ENCODE measurements at regions of chrX and their contacts with region 1.

Region 1: GRCh38 chrX:46984705-46985104 is 72.5 kb downstream of the JADE3 start:
- DNase-seq: no peak
- H3K4me3 Mint-ChIP-seq: no peak overlapping the region
- H3K27ac Mint-ChIP-seq: no peak overlapping the region
- H3K4me1 Mint-ChIP-seq: no peaks in the 10 kb centered on the region
- H3K27me3 Mint-ChIP-seq: no peaks in the 10 kb centered on the region

Region 2: DNA sequence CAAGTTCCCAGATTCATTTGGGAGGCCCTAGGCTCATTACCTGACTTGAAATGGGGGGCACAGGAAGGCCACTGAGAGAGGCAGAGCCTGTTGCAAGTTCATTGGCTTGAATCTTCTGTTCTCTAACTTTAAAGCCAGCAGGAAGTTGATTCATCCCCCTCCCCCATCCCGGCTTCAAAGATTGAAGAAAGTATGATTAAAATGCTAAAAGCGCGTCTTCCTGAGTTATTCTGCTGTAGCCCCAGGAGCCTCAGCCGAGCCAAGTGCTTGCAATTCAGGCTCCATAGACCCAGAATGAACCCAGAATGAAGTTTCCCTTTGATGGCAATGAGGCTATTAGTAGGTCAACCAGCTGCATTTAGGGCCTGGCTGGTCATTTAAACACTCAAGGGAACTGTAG is 396.4 kb before region 1 on chrX:
- CTCF ChIA-PET with region 1: no interaction called
- intact Hi-C with region 1: no loop called
- DNase-seq: peak; percentile 78
- H3K4me3 Mint-ChIP-seq: peak overlapping the region; percentile 34
- H3K27ac Mint-ChIP-seq: peak overlapping the region; percentile 80
- H3K4me1 Mint-ChIP-seq: peaks cover 22% of the 10 kb centered on the region
- H3K27me3 Mint-ChIP-seq: no peaks in the 10 kb centered on the region

Region 3: GRCh38 chrX:46812445-46812844 is 172.3 kb before region 1 on chrX:
- CTCF ChIA-PET with region 1: no interaction called
- intact Hi-C with region 1: no loop called
- DNase-seq: no peak
- H3K4me3 Mint-ChIP-seq: no peak overlapping the region
- H3K27ac Mint-ChIP-seq: no peak overlapping the region
- H3K4me1 Mint-ChIP-seq: no peaks in the 10 kb centered on the region
- H3K27me3 Mint-ChIP-seq: no peaks in the 10 kb centered on the region

Region 4: GRCh38 chrX:46841346-46841745 is 143.4 kb before region 1 on chrX:
- CTCF ChIA-PET with region 1: no interaction called
- intact Hi-C with region 1: no loop called
- DNase-seq: no peak
- H3K4me3 Mint-ChIP-seq: no peak overlapping the region
- H3K27ac Mint-ChIP-seq: no peak overlapping the region
- H3K4me1 Mint-ChIP-seq: peaks cover 4% of the 10 kb centered on the region
- H3K27me3 Mint-ChIP-seq: no peaks in the 10 kb centered on the region

Region 5: DNA sequence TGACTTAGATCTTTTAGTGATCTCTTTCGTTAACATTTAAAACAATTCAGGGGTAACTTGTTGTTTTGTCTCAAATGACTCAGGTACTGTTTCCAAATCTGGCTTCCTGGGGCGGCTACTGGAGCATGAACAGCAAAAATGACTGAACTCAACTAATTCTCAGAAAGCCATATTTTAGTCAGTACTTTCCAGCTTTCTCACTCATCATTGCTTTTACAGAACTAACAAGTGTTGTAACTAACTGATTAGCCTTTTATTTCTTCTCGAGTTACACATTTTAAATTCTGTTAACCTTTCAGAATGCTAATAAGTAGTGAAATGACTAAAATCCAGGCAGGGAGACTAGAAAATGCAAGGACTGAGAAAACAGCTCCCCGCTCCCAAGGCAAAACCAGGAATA is 17.2 kb before region 1 on chrX:
- CTCF ChIA-PET with region 1: no interaction called
- intact Hi-C with region 1: no loop called
- DNase-seq: peak; percentile 38
- H3K4me3 Mint-ChIP-seq: no peak overlapping the region
- H3K27ac Mint-ChIP-seq: no peak overlapping the region
- H3K4me1 Mint-ChIP-seq: peaks cover 11% of the 10 kb centered on the region
- H3K27me3 Mint-ChIP-seq: peaks cover 3% of the 10 kb centered on the region

Region 6: GRCh38 chrX:47093248-47093647 is 108.5 kb after region 1 on chrX:
- CTCF ChIA-PET with region 1: no interaction called
- intact Hi-C with region 1: loop called (anchors 10 kb)
- DNase-seq: peak; percentile 21
- H3K4me3 Mint-ChIP-seq: no peak overlapping the region
- H3K27ac Mint-ChIP-seq: no peak overlapping the region
- H3K4me1 Mint-ChIP-seq: peaks cover 13% of the 10 kb centered on the region
- H3K27me3 Mint-ChIP-seq: no peaks in the 10 kb centered on the region